ENCODE measurements at regions of chr2 and their contacts with region 1.

Region 1: GRCh38 chr2:118046634-118047210 is 32.9 kb upstream of the CCDC93 start:
- H3K4me3 Mint-ChIP-seq: no peak overlapping the region
- H3K27ac Mint-ChIP-seq: no peak overlapping the region
- H3K4me1 Mint-ChIP-seq: peaks cover 15% of the 10 kb centered on the region
- H3K27me3 Mint-ChIP-seq: peaks cover 20% of the 10 kb centered on the region

Region 2: GRCh38 chr2:118061135-118061955 is 14.6 kb after region 1 on chr2:
- intact Hi-C with region 1: loop called (anchors 1 kb)
- H3K4me3 Mint-ChIP-seq: no peak overlapping the region
- H3K27ac Mint-ChIP-seq: peak overlapping the region; percentile 25
- H3K4me1 Mint-ChIP-seq: peaks cover 42% of the 10 kb centered on the region
- H3K27me3 Mint-ChIP-seq: no peaks in the 10 kb centered on the region

Region 3: GRCh38 chr2:118148809-118149208 is 102.1 kb after region 1 on chr2:
- intact Hi-C with region 1: loop called (anchors 2 kb)
- H3K4me3 Mint-ChIP-seq: no peak overlapping the region
- H3K27ac Mint-ChIP-seq: no peak overlapping the region
- H3K4me1 Mint-ChIP-seq: peaks cover 16% of the 10 kb centered on the region
- H3K27me3 Mint-ChIP-seq: peaks cover 5% of the 10 kb centered on the region

Region 4: DNA sequence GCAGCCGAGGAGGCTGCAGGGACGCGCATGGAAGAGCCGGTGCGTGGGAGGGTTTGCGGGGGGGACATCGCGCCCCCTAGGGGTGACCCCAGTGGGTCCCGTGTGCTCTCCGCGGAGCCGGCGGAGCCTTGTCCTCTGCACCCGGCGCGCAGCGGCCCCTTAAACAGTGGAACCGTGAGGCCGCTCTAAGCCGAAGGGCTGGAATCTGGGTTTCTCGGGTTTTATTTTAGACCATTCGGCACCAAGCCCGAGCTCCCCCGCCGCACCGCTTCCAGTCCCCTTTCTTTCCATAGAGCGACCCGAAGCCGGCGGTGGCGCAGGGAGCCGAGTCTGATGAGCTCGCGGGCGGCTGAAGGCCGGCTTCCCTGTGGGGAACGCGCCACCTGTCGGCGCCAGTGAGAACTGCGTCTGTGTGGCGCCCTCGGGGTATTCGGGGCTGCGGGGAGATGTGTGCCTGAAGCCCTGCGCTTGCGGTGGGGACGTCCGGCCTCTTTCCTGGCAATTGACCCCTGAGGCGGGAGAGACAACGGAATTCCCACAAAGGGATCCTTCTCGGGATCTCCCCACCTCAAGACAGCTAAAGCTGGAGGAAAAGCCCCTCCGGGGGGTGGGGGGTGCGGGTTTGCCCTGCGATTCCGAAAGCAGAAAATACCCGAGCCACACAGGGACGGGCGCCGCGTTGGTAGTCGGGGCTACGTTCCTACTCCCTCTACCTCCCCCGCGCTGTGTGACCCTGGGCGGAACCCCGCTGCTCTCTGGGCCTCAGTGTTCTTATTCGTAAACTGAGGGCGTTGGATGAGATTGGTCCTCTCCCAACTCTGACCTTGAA is 808.9 kb after region 1 on chr2:
- intact Hi-C with region 1: loop called (anchors 10 kb)
- H3K4me3 Mint-ChIP-seq: peak overlapping the region; percentile 64
- H3K27ac Mint-ChIP-seq: no peak overlapping the region
- H3K4me1 Mint-ChIP-seq: peaks cover 13% of the 10 kb centered on the region
- H3K27me3 Mint-ChIP-seq: peaks cover 98% of the 10 kb centered on the region

Region 5: GRCh38 chr2:119223521-119224390 is 1177.0 kb after region 1 on chr2 and contains the start of gene STEAP3:
- intact Hi-C with region 1: no loop called
- H3K4me3 Mint-ChIP-seq: peak within 1 kb of the TSS; percentile 70
- H3K27ac Mint-ChIP-seq: no peak within 1 kb of the TSS
- H3K4me1 Mint-ChIP-seq: peaks cover 14% of the 10 kb centered on the region
- H3K27me3 Mint-ChIP-seq: peaks cover 37% of the 10 kb centered on the region